Left colon (tissue), 2 donors: ENCODE measurements at regions of chr7 and their contacts with region 1.

Region 1: GRCh38 chr7:101066141-101066832 is 19.0 kb upstream of the TRIM56 start:
- DNase-seq: no peak
- ATAC-seq: no peak

Region 2: DNA sequence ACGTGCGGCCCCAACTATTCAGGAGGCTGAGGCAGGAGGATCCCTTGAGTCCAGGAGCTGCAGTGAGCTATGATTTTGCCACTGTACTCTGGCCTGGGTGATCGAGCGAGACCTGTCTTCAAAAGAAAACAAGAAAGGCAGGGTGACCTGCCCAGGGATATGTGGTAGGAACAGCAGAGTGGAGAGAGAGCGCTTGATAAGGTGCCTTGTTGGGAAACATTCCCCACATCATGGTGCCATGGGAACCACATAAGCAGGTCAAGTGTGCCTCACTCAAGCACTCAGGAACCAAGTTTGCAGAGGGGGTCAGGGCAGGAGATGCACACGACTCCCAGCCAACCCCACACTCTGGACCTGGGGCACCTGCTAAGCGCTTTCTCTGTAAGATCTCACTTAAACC is 809.3 kb before region 1 on chr7:
- intact Hi-C with region 1: no loop called
- DNase-seq: no peak
- ATAC-seq: no peak

Region 3: DNA sequence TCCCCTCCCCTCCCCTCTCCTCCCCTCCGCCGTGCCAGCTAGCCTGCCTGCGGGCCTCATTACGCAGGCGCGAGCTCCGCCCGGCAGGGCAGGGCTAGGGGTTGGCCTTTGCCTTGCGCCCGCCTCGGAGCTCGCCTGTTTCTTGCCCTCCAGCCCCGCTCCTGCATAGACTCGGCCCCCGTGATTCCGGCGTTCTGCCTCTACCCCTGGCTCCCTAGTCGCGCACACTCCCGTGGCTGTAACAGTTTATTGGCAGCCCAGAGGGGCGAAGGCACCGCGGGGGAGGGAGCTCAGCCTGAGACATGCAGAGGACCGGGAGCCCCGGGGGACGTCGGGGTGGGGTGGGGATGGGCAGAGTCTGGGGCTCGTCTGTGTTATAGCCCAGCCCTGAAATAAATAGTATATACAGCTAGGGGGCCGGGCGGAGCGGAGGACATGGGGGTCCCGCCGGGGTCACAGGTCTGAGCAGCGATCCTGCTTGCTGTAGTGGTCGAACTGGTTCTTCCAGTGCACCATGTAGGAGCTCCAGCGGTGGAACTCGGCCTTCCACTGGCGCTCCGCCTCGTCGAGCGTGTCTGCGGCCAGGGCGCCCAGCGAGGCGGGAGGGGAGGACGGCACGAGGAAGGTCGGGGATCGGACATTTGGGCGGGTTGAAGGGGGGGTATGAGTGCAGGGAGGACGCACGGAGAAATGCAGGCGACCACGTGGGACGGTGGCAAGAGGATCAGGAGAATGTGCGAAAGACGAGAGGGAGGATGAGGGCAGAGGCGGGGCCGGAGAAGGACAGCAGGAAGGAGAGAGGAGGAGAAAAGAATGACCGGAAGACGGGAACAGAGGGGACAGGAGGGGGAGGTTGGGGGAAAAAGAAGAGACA is 176.3 kb before region 1 on chr7:
- intact Hi-C with region 1: loop called in 1 of 2 experiments (anchors 10 kb)
- DNase-seq: peak; percentile 94
- ATAC-seq: peak; percentile 83

Region 4: DNA sequence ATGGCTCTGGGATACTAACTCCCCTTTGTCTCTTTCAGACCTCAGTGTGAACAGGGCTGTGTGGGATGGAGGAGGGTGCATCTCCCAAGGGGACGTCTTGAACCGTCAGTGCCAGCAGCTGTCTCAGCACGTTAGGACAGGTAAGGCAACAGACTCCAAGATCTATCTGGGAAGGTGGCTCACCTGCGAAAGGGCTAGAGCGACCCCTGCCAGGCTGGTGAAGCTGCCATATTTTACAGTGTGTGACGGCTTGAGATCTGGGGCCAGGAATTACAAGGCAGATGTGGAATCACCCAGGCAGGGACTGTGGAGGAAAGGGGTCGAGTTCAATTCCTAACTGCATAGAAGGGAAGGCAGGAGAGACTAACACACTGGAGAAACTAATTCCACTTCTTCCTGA is 35.2 kb before region 1 on chr7:
- intact Hi-C with region 1: no loop called
- DNase-seq: no peak
- ATAC-seq: peak; percentile 71

Region 5: GRCh38 chr7:101217388-101218235 is 151.3 kb after region 1 on chr7 and contains the starts of genes PLOD3 and ZNHIT1:
- intact Hi-C with region 1: no loop called
- DNase-seq: peak; percentile 97 to 99
- ATAC-seq: peak; percentile 83
- total RNA-seq, gene PLOD3: 81.9 to 85.9 TPM
- total RNA-seq, gene ZNHIT1: 85.3 to 92.9 TPM